OCI-LY7 (cell line): ENCODE measurements at regions of chr7 and their contacts with region 1.

Region 1: GRCh38 chr7:39732837-39733804 is 109.7 kb downstream of the RALA start:
- DNase-seq: peak; percentile 94
- H3K4me3 ChIP-seq: peak overlapping the region; percentile 86
- H3K27ac ChIP-seq: peak overlapping the region; percentile 72
- H3K4me1 ChIP-seq: peaks cover 35% of the 10 kb centered on the region
- CTCF ChIP-seq: no peak

Region 2: GRCh38 chr7:39691821-39692220 is 41.3 kb before region 1 on chr7:
- CTCF ChIA-PET with region 1: no interaction called
- POLR2A ChIA-PET with region 1: no interaction called
- intact Hi-C with region 1: no loop called
- DNase-seq: no peak
- H3K4me3 ChIP-seq: no peak overlapping the region
- H3K27ac ChIP-seq: no peak overlapping the region
- H3K4me1 ChIP-seq: no peaks in the 10 kb centered on the region
- CTCF ChIP-seq: no peak

Region 3: DNA sequence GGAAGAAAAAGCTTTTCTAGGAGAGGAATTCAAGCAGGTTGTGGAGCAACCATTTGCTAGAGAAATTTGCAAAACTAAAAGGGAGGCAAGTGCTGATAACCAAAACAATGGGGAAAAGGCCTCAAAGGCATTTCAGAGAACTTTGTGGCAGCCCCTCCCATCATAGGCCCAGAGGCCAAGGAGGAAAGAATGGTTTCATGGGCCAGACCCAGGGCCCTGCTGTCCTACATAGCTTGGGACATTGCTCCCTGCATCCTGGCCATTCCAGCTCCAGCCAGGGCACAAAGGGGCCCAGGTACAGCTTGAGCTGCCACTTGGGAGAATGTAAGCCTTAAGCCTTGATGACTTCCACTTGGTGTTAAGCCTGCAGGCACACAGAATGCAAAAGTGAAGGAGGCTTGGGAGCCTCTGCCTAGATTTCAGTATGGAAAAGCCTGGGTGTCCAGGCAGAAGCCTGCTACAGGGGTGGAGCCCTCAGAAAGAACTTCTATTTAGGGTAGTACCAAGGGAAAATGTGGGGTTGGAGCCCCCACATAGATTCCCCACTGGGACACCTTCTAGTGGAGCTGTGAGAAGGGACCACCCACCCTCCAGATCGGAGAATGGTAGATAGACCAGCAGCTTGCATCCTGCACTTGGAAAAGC is 18.6 kb before region 1 on chr7:
- CTCF ChIA-PET with region 1: no interaction called
- POLR2A ChIA-PET with region 1: no interaction called
- intact Hi-C with region 1: no loop called
- DNase-seq: no peak
- H3K4me3 ChIP-seq: no peak overlapping the region
- H3K27ac ChIP-seq: no peak overlapping the region
- H3K4me1 ChIP-seq: no peaks in the 10 kb centered on the region
- CTCF ChIP-seq: no peak

Region 4: GRCh38 chr7:39746103-39746819 is 13.1 kb after region 1 on chr7:
- CTCF ChIA-PET with region 1: interaction called, 13 read pairs
- POLR2A ChIA-PET with region 1: interaction called, 7 read pairs
- intact Hi-C with region 1: no loop called
- DNase-seq: peak; percentile 64
- H3K4me3 ChIP-seq: no peak overlapping the region
- H3K27ac ChIP-seq: no peak overlapping the region
- H3K4me1 ChIP-seq: no peaks in the 10 kb centered on the region
- CTCF ChIP-seq: peak; percentile 93